ENCODE measurements at regions of chr14 and their contacts with region 1.

Region 1: DNA sequence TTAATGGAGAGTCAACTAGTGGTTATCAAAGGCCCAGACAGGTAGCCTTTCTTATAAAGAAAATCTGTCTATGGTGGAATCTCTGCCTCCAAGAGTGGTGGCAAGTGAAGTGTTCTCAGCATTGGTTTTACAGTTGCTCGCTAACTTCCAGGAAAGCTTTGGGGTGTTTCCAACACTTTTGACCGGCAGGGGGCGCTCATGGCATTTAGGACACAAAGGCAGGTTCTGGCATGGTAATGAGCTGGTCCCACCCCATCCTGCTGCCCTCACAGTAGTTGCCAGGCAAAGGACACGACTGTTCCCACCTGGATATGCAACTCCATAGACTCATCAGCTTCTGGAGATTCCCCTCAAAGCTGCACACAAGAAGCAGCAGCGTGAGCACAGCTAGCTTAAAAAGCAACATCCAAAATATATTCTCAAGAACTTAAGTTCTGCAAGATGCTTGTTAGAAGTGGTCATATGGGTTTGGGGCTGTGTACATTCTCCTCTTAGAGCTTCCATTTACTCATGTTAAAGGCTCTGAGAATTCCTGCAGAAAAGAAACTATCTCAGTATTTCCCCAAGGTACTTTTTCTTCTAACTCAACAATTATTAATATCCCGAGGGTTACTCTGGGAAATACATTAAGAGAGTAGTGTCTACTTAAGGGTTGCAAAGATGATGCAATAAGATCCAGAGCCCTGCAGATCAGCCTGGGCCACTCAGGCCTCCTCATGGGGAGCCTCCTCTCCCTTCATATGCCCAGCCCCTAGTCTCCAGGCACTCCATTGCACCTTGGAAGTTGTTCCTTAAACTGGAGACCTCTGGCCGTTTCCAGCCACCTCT is 14.8 kb downstream of the PROX2 start:
- H3K4me3 Mint-ChIP-seq: no peak overlapping the region
- H3K27ac Mint-ChIP-seq: no peak overlapping the region
- H3K4me1 Mint-ChIP-seq: peaks cover 22% of the 10 kb centered on the region
- H3K27me3 Mint-ChIP-seq: no peaks in the 10 kb centered on the region

Region 2: DNA sequence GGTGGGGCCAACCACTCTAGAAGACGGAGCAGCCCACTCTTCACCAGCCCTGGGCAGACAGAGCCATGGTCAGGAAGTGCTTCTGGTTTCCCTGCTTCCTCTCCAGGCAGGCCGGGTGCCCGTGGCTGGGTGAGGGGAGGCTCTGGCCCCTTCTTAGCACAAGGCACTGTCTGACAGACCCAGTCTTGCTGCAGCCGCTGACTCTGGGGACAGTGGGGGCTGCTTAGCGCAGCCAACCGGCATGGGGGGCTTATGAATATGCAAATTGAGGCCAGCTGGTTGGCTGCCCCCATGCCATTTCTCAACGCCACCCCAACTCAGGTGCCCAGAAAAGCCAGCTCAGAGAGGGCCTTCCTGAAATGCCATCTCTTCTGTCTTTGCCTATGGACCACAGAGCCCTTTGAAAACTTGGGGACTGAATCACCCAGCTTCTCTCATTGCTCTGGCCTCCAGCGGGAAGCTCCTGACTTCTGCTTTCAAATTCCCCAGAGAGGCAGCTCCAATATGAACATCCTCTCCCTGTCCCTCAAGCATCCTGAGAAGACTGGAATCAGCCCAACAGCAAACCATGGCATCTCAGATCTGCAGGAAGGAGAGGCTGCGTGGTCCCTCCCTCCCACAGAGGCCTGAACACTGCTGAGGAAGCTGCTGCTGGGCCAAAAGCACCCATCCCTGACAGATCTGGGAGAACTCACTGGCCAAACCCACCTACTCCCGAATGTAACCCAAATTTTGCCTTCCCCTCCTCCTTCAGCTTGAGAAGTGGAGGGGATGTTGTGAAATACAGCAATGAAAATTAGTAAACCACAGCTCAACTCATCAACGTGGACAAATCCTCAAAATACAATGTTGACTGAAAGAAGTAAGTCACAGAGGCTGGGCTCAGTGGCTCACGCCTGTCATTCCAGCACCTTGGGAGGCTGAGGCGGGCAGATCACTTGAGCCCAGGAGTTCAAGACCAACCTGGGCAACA is 15.1 kb after region 1 on chr14 and contains the start of gene PROX2:
- intact Hi-C with region 1: loop called (anchors 2 kb)
- H3K4me3 Mint-ChIP-seq: no peak within 1 kb of the TSS
- H3K27ac Mint-ChIP-seq: peak within 1 kb of the TSS; percentile 45
- H3K4me1 Mint-ChIP-seq: peaks cover 29% of the 10 kb centered on the region
- H3K27me3 Mint-ChIP-seq: no peaks in the 10 kb centered on the region

Region 3: GRCh38 chr14:74905375-74906142 is 44.4 kb after region 1 on chr14:
- intact Hi-C with region 1: loop called (anchors 1 kb)
- H3K4me3 Mint-ChIP-seq: no peak overlapping the region
- H3K27ac Mint-ChIP-seq: no peak overlapping the region
- H3K4me1 Mint-ChIP-seq: peaks cover 6% of the 10 kb centered on the region
- H3K27me3 Mint-ChIP-seq: no peaks in the 10 kb centered on the region

Measured in dendritic cell treated with granulocyte-macrophage colony-stimulating factor and Interleukin-4, amounts not matched to agents 40 ng/mL and 50 ng/mL, for 4 days (primary cell).